ENCODE measurements at regions of chr16 and their contacts with region 1.

Region 1: DNA sequence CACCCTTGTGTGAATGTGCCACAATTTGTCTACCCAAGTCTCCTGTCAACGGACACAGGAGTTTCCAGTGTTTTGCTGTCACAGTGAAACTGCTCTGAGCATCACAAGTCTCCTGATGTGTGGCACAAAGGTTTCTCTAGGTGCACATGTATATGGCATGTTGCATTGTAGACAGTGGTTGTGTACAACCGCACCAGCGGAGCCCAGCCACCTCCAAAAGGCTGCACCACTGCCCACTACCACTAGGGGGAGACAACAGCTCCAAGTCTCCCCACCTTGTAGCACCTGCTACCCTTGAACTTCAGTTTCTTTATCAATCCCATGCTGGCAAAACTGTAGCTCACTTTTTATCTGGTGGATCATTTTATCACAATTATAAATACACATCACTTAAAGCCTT is 95.5 kb upstream of the ZNF469 start:
- DNase-seq: peak; percentile 18

Region 2: GRCh38 chr16:87950765-87951549 is 336.3 kb before region 1 on chr16 and contains the start of gene BANP:
- in situ Hi-C with region 1: loop called (anchors 25 kb)
- DNase-seq: peak; percentile 99
- total RNA-seq, gene BANP: 14.9 and 16.7 TPM in 2 replicates

Measured in Caki2 (cell line).